ENCODE measurements at regions of chr22 and their contacts with region 1.

Region 1: DNA sequence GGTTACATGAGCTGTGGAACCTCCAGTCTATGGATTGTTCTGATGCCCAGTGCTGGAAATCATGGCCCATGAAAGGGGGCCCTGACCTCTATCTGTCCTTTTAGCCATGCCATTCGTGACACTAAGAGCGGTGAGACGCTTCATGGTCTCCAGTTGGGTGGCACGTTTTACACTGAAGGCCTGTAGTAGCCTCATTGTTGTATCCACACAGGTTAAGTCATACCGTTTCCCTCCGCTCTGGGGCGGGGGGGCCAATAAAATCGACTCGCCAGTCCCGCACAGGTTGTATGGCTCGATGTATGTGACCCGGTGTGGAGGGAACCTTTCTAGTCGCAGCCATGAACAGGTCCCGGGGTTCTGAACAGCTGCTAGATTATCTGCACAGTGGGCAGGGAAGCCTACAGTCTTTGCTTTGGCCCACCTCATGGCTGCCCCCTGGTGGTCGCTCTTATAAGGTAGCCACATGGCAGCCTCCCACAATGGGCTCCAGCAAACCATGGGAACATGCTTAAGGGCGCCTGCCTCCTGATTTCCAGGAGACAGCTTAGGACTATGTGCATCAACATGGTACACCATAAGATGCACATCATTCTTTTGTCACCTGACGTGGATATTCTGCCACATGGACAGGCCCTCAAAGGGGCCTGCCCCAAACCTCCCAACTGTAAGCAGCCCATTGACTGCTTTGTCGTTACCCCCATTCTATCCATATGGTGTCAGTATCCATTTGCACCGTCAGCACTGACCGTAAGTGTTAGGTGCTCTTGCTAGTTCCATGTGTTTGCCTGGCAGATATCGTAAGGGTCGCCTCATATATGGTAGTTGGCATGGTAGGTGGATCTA is 19.7 kb upstream of the APOL3 start:
- DNase-seq: peak; percentile 92
- ATAC-seq: peak; percentile 99
- H3K4me3 Mint-ChIP-seq: no peak overlapping the region
- H3K27ac Mint-ChIP-seq: no peak overlapping the region
- H3K4me1 Mint-ChIP-seq: peaks cover 10% of the 10 kb centered on the region
- H3K27me3 Mint-ChIP-seq: no peaks in the 10 kb centered on the region

Region 2: DNA sequence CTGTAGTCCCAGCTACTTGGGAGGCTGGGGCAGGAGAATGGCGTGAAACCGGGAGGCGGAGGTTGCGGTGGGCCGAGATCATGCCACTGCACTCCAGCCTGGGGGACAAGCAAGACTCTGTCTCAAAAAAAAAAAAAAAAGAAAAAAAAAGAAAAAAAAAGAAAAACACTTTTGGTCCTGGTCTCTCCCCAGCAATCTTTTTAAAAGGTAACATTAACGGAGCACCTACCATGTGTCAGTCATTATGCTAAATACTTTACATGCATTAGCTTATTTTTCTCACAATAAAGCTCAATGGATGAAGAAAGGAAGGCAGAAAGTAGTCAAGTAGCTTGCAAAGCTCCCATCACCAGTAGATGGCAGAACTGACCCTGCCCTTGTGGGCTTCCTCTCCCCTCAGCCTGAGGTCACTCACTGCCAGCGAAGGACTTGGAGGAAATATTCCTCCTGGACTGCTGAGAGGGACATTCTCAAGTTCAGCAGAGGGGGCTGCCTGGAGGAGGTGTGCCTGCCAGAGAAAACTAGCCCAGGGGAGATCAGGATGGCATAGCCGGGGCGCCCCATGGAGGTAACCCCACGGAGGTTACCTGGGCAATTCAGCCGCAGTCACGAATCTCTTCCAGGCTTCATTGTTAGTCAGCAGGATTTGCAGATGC is 35.2 kb before region 1 on chr22:
- CTCF ChIA-PET with region 1: interaction called, 15 read pairs
- POLR2A ChIA-PET with region 1: no interaction called
- intact Hi-C with region 1: loop called (anchors 1 kb)
- DNase-seq: peak; percentile 57
- ATAC-seq: peak; percentile 76
- H3K4me3 Mint-ChIP-seq: no peak overlapping the region
- H3K27ac Mint-ChIP-seq: no peak overlapping the region
- H3K4me1 Mint-ChIP-seq: peaks cover 13% of the 10 kb centered on the region
- H3K27me3 Mint-ChIP-seq: no peaks in the 10 kb centered on the region

Region 3: DNA sequence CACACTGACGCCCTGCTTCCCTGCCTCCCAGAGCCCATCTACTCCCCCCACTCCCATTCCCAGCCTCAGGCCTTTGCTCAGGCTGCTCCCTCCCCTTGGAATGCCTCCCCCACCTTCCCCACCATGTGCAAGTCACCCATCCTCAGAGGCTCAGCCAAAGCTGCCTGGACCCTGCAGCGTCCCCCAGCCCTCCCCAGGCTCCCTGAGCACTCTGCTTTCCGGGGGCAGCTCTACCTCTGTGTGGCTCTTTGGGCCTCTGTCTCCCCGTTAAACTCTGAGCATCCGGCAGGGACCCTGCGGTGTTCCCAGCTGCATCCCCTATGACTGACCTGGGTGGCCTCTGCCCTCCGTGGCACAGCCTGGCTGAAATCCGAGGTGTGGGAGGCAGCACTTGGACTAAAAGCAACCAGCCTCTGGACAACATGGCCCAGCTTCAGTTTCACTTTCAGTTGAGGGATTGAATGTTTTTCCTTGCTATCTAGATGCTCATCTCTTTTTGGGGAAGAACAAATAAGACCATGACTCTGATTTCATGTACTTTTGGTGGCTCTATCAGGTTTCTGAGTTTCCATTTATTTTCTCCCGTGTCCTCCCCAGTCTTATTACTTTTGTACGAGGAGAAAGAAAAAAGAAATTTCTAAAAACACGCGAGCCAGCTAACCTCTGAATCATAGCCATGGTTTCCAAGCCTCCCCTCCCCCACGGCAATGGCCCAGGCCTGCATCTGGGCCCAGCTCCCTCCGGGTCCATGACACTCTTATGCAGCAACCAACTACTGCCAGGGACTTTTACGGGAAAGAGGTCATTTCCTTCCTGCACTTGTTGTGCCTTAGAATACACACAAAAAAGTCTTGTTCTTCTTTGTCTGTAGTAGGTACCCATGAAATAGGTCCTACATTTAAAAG is 23.5 kb before region 1 on chr22:
- CTCF ChIA-PET with region 1: interaction called, 30 read pairs
- POLR2A ChIA-PET with region 1: interaction called, 3 read pairs
- intact Hi-C with region 1: no loop called
- DNase-seq: peak; percentile 89
- ATAC-seq: peak; percentile 72
- H3K4me3 Mint-ChIP-seq: peak overlapping the region; percentile 84
- H3K27ac Mint-ChIP-seq: peak overlapping the region; percentile 99
- H3K4me1 Mint-ChIP-seq: peaks cover 94% of the 10 kb centered on the region
- H3K27me3 Mint-ChIP-seq: no peaks in the 10 kb centered on the region

Region 4: DNA sequence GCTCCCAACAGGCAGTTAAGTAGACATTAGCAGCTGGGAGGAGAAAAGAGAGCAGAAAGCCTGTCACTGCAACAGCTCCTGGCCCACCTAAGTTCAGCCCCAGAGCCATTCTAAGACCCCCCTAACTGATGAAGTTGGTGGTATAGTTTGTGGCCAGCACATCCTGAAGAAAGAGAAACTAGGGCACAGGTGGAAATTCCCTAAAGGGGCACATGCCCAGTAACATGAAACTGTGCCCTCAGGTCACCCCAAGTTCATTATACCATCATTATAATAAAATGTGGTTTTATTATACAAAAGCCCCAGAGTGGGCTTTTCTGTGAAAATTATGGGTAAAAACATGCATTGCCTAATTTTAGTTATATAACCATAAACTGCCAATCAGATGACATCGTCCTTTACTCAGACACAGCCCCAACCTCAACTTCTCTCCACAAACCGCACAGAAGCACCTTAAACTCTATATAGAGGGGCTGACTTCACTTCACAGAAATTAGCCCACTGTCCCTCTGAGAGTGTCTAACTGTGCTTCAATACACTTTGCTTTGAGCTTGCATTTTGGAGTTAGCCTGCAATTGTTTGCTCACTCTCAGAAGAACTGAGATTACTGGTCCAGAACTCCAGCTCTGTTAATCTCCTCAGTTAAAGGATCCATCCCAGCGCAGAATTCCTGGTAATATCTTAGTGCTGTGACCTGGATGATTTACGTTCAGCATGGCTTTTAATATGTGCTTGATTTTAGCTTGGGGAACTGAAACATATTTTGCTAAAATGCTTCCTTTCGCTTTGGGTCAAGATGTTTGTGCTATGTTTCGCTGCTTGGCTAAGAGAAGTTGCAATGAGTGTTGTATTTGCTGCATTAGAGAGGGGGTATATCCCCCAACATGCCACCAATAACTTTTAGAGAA is 17.9 kb before region 1 on chr22:
- CTCF ChIA-PET with region 1: interaction called, 30 read pairs
- POLR2A ChIA-PET with region 1: interaction called, 3 read pairs
- intact Hi-C with region 1: no loop called
- DNase-seq: peak; percentile 41
- ATAC-seq: no peak
- H3K4me3 Mint-ChIP-seq: no peak overlapping the region
- H3K27ac Mint-ChIP-seq: peak overlapping the region; percentile 96
- H3K4me1 Mint-ChIP-seq: peaks cover 66% of the 10 kb centered on the region
- H3K27me3 Mint-ChIP-seq: no peaks in the 10 kb centered on the region